ENCODE measurements at regions of chr5 and their contacts with region 1.

Region 1: GRCh38 chr5:78768781-78769380 is 120.3 kb upstream of the LHFPL2 start:
- DNase-seq: no peak
- H3K4me3 ChIP-seq: no peak overlapping the region
- H3K27ac ChIP-seq: no peak overlapping the region
- H3K4me1 ChIP-seq: no peaks in the 10 kb centered on the region
- H3K27me3 ChIP-seq: no peaks in the 10 kb centered on the region
- CTCF ChIP-seq: no peak
- POLR2A ChIP-seq: no peak

Region 2: GRCh38 chr5:78691084-78691960 is 77.6 kb before region 1 on chr5:
- intact Hi-C with region 1: loop called (anchors 2 kb)
- DNase-seq: no peak
- H3K4me3 ChIP-seq: no peak overlapping the region
- H3K27ac ChIP-seq: peak overlapping the region; percentile 56 to 77
- H3K4me1 ChIP-seq: peaks cover 3 to 8% of the 10 kb centered on the region in 2 donors
- H3K27me3 ChIP-seq: no peaks in the 10 kb centered on the region
- CTCF ChIP-seq: no peak
- POLR2A ChIP-seq: no peak

Region 3: GRCh38 chr5:78757269-78758053 is 11.4 kb before region 1 on chr5:
- intact Hi-C with region 1: no loop called
- DNase-seq: no peak
- H3K4me3 ChIP-seq: no peak overlapping the region
- H3K27ac ChIP-seq: peak overlapping the region in 1 of 2 donors; percentile 48
- H3K4me1 ChIP-seq: no peaks in the 10 kb centered on the region
- H3K27me3 ChIP-seq: no peaks in the 10 kb centered on the region
- CTCF ChIP-seq: no peak
- POLR2A ChIP-seq: no peak